AG04449 (cell line): ENCODE measurements at regions of chr4 and their contacts with region 1.

Region 1: GRCh38 chr4:152454398-152455011 is 81.4 kb downstream of the FBXW7 start:
- DNase-seq: no peak
- H3K4me3 ChIP-seq: no peak overlapping the region
- CTCF ChIP-seq: peak; percentile 29

Region 2: GRCh38 chr4:152310262-152310661 is 144.2 kb before region 1 on chr4:
- CTCF ChIA-PET with region 1: no interaction called
- POLR2A ChIA-PET with region 1: no interaction called
- DNase-seq: peak; percentile 31
- H3K4me3 ChIP-seq: no peak overlapping the region
- CTCF ChIP-seq: no peak

Region 3: GRCh38 chr4:152479428-152480026 is 25.0 kb after region 1 on chr4:
- CTCF ChIA-PET with region 1: interaction called, 10 read pairs
- POLR2A ChIA-PET with region 1: no interaction called
- DNase-seq: no peak
- H3K4me3 ChIP-seq: no peak overlapping the region
- CTCF ChIP-seq: no peak

Region 4: GRCh38 chr4:152634110-152634760 is 179.7 kb after region 1 on chr4:
- CTCF ChIA-PET with region 1: interaction called, 52 read pairs
- POLR2A ChIA-PET with region 1: no interaction called
- DNase-seq: no peak
- H3K4me3 ChIP-seq: no peak overlapping the region
- CTCF ChIP-seq: no peak

Region 5: DNA sequence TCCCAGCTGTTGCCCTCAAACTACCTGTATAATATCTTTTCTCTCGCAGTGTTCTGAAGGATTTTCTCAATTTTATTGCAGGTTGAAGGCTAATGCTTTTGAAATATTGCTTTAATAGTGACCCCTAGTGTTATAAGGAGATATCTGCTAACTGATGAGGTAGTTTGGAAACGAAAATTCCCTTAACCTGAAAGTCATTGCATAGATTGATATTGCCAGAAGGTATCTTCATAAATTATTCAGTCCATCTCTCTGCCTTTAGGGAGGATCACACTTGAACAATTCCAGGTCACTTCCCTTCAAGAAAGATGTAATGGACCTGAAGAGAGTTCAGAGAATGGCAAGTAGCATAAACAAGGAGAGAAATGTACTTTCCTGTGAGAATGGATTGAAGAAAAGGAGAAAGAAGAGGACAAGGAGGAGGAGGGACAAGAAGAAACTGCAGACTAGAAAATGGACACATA is 280.9 kb after region 1 on chr4:
- CTCF ChIA-PET with region 1: interaction called, 14 read pairs
- POLR2A ChIA-PET with region 1: no interaction called
- DNase-seq: no peak
- H3K4me3 ChIP-seq: no peak overlapping the region
- CTCF ChIP-seq: peak; percentile 38